Posterior vena cava (tissue), 2 donors: ENCODE measurements at regions of chr21 and their contacts with region 1.

Region 1: DNA sequence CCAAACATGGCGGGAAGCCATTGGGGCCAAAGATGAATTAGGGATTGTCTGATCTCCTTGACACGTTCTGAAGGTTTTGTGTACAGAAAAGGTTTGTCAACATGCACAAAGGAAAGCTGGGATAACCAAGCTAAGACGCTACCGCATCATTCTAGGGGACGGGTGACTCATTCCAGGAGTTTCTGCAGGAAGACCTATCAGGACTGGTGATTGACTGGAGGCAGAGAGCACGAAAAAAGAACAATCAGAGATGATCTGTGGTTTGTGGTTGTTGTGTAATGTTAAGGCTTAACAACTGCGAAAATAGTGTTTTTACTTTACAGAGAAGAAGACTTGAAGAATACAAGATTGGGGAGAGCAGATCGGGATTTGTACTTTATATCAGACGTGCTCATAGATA is 22.2 kb upstream of the ERG start:
- DNase-seq: no peak

Region 2: DNA sequence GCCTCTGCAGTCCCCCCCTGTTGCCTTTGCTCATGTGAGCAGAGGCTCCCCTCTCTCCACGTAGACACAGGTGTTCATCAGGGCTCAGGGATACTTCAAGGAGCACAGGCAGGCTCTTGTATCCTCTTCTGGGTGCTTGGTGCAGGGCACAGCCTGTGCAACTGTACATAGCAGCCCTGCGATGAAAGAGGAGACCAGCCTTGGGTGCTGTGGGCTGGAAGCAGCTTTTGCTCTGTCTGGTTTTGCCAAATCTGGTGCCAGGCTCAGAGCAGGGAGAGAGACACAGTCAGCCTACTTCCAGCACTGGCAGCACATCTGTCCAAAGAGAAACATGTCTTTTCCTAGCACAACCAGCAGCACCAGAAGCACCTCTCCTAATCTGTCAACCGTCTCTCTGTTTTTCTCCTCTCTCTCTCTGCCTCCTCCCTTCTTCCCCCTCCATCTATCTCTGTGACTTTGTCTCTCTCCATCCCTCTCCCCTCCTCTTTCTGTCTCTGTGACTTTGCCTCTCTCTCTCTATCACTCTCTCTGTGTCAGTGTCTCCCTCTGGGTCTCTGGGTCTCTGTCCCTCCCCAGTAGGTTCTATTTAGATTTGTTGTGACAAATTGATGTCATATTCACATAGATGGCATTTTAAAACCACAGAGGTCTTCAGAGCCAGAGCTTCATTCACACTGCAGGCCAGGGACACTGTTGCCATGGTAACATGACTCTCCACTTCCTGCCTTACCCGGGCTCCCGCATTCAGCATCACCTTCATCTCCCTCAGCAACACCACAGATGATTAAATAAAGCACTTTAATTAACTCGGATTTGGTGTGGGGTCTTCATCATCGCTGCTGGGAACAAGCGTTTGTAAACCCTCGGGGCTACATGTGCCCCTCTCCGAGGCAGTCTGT is 417.6 kb after region 1 on chr21:
- intact Hi-C with region 1: loop called in 1 of 2 experiments (anchors 5 kb)
- DNase-seq: no peak